ENCODE measurements at regions of chr2 and their contacts with region 1.

Region 1: DNA sequence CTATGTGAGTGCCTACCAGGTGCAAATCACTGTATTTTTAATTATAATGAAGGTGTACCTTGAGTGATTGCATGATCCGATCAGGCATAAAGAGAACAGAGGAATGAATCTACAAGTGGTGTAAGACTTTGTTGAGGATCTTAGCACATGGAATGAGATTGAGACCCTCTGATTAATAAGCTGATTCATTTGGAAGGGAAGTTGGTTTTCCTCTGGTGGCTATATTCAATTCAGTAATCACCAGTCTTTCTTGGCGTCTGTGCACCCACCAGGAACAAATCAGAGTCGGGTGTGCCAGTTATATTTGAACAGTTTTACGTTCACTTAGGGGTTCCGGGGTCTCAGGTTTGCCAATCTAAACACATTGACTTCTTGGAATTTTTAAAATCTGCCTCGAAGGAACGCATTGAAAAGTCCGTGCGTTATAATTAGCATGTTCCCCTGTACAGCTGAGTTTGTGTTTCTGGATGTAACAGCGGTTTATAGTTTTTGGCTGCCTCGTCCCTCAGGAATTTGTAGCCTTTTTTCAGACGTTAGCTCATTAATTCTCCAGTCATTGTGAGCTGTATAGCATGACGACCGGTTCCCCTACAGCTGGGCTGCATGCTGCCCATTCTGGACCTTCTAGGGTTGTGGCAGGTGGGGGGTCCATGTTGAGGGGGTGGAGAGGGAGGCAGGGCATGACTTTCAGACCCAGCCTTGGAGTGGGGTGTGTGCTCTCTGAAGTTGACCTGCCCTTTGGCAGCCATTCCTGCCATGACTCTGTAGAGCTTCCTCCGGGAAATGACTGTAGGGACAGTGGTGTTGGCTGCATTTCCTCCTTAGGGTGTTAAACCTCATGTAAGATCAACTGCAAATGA is 20.3 kb downstream of the MYO1B start:
- DNase-seq: no peak
- ATAC-seq: no peak
- H3K4me3 ChIP-seq: no peak overlapping the region
- H3K4me3 Mint-ChIP-seq: no peak overlapping the region
- H3K27ac ChIP-seq: no peak overlapping the region
- H3K27ac Mint-ChIP-seq: no peak overlapping the region
- H3K4me1 ChIP-seq: no peaks in the 10 kb centered on the region
- H3K4me1 Mint-ChIP-seq: no peaks in the 10 kb centered on the region
- H3K27me3 ChIP-seq: no peaks in the 10 kb centered on the region
- H3K27me3 Mint-ChIP-seq: peaks cover 7 to 8% of the 10 kb centered on the region in 2 donors

Region 2: GRCh38 chr2:190432567-190433231 is 832.8 kb before region 1 on chr2:
- CTCF ChIA-PET with region 1: no interaction called
- POLR2A ChIA-PET with region 1: interaction called in 1 of 2 experiments, 13 read pairs
- DNase-seq: no peak
- ATAC-seq: no peak
- H3K4me3 ChIP-seq: no peak overlapping the region
- H3K4me3 Mint-ChIP-seq: no peak overlapping the region
- H3K27ac ChIP-seq: no peak overlapping the region
- H3K27ac Mint-ChIP-seq: peak overlapping the region in 1 of 2 donors; percentile 10
- H3K4me1 ChIP-seq: peaks cover 2 to 23% of the 10 kb centered on the region in 2 experiments
- H3K4me1 Mint-ChIP-seq: peaks cover 65 to 70% (median 68%) of the 10 kb centered on the region in 3 donors
- H3K27me3 ChIP-seq: no peaks in the 10 kb centered on the region
- H3K27me3 Mint-ChIP-seq: no peaks in the 10 kb centered on the region

Region 3: DNA sequence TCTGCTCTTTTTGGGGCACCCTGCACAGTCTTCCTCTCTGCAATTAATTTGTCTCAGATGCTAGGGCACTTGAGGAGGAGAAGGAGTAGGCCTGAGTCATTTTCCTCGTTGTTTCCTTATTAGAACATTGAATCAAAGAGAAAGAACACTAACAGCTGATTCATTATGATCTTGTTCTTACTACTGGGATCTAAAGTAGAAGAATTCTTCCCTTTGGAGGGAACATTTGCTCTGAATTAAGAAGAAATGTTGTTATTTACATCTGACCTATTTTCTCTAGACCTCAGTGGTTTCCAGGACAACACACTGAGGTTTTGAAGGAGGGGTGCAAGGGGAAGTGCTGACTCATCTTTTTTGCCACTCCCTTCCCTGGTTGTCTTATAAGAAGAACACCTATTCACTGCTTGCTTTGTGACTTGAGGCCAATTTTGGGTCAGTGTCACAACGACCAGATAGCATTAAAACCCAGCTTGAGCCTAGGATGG is 227.3 kb before region 1 on chr2:
- CTCF ChIA-PET with region 1: no interaction called
- POLR2A ChIA-PET with region 1: no interaction called
- DNase-seq: peak in 8 of 35 experiments; percentile 16 to 66 (median 26)
- ATAC-seq: peak; percentile 59 to 85 (median 74)
- H3K4me3 ChIP-seq: no peak overlapping the region
- H3K4me3 Mint-ChIP-seq: peak overlapping the region; percentile 11 to 58 (median 24)
- H3K27ac ChIP-seq: peak overlapping the region; percentile 68
- H3K27ac Mint-ChIP-seq: peak overlapping the region; percentile 89 to 94
- H3K4me1 ChIP-seq: peaks cover 0 to 24% of the 10 kb centered on the region in 2 experiments
- H3K4me1 Mint-ChIP-seq: peaks cover 28 to 42% (median 28%) of the 10 kb centered on the region in 3 donors
- H3K27me3 ChIP-seq: no peaks in the 10 kb centered on the region
- H3K27me3 Mint-ChIP-seq: no peaks in the 10 kb centered on the region

Measured in T-cell (primary cell).